ENCODE measurements at regions of chr1 and their contacts with region 1.

Region 1: GRCh38 chr1:244945109-244945671 is 80.8 kb upstream of the HNRNPU start:
- DNase-seq: no peak
- ATAC-seq: peak; percentile 29
- H3K4me3 Mint-ChIP-seq: peak overlapping the region; percentile 55
- H3K27ac Mint-ChIP-seq: peak overlapping the region; percentile 82
- H3K4me1 Mint-ChIP-seq: peaks cover 35% of the 10 kb centered on the region
- H3K27me3 Mint-ChIP-seq: no peaks in the 10 kb centered on the region
- CTCF ChIP-seq: no peak

Region 2: GRCh38 chr1:244815600-244816099 is 129.5 kb before region 1 on chr1:
- CTCF ChIA-PET with region 1: no interaction called
- POLR2A ChIA-PET with region 1: interaction called, 10 read pairs
- intact Hi-C with region 1: no loop called
- DNase-seq: no peak
- ATAC-seq: peak; percentile 56
- H3K4me3 Mint-ChIP-seq: peak overlapping the region; percentile 82
- H3K27ac Mint-ChIP-seq: peak overlapping the region; percentile 84
- H3K4me1 Mint-ChIP-seq: peaks cover 28% of the 10 kb centered on the region
- H3K27me3 Mint-ChIP-seq: no peaks in the 10 kb centered on the region
- CTCF ChIP-seq: no peak

Region 3: GRCh38 chr1:244881552-244882280 is 63.5 kb before region 1 on chr1:
- CTCF ChIA-PET with region 1: no interaction called
- POLR2A ChIA-PET with region 1: no interaction called
- intact Hi-C with region 1: no loop called
- DNase-seq: no peak
- ATAC-seq: no peak
- H3K4me3 Mint-ChIP-seq: no peak overlapping the region
- H3K27ac Mint-ChIP-seq: no peak overlapping the region
- H3K4me1 Mint-ChIP-seq: peaks cover 5% of the 10 kb centered on the region
- H3K27me3 Mint-ChIP-seq: peaks cover 4% of the 10 kb centered on the region
- CTCF ChIP-seq: no peak

Region 4: GRCh38 chr1:244918421-244919319 is 26.5 kb before region 1 on chr1:
- CTCF ChIA-PET with region 1: interaction called, 4 read pairs
- POLR2A ChIA-PET with region 1: interaction called, 9 read pairs
- intact Hi-C with region 1: loop called (anchors 1 kb)
- DNase-seq: peak; percentile 61
- ATAC-seq: peak; percentile 83
- H3K4me3 Mint-ChIP-seq: peak overlapping the region; percentile 89
- H3K27ac Mint-ChIP-seq: peak overlapping the region; percentile 66
- H3K4me1 Mint-ChIP-seq: peaks cover 26% of the 10 kb centered on the region
- H3K27me3 Mint-ChIP-seq: no peaks in the 10 kb centered on the region
- CTCF ChIP-seq: no peak

Region 5: DNA sequence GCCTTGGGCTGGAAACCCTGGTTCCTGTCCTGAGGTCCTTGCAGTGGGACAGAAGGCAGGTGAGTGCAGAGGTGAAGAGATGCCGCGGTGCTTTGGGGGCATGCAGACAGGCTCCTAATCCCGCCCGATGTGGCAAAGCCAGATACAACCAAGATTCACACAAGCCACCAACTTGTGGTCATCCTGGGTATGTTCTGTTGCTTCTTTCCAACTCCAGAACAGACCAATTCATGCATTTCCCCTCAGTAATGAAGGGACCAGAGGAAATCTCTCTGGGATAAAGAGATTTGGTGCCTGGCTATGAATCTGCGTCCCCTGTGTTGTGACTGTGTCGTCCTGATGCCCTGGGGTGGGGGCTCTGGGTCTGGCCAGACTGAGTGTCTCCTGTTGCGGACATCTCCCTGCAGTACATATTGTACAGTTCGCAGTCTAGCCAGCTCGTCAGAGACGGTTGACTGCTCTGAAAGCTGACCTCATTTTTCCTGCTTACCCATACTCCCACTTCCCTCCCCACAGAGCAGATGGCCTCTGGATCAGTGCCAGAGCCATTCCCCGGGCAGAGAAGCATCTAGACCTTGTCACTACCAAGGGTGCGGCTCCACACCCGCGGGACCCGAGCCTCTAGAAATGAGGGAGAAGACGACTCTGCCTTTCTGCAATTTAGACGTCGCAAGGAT is 425.9 kb after region 1 on chr1:
- CTCF ChIA-PET with region 1: no interaction called
- POLR2A ChIA-PET with region 1: no interaction called
- intact Hi-C with region 1: no loop called
- DNase-seq: no peak
- ATAC-seq: no peak
- H3K4me3 Mint-ChIP-seq: no peak overlapping the region
- H3K27ac Mint-ChIP-seq: no peak overlapping the region
- H3K4me1 Mint-ChIP-seq: no peaks in the 10 kb centered on the region
- H3K27me3 Mint-ChIP-seq: peaks cover 3% of the 10 kb centered on the region
- CTCF ChIP-seq: no peak